Dorsolateral prefrontal cortex (tissue), 120 donors: ENCODE measurements at regions of chr3 and their contacts with region 1.

Region 1: DNA sequence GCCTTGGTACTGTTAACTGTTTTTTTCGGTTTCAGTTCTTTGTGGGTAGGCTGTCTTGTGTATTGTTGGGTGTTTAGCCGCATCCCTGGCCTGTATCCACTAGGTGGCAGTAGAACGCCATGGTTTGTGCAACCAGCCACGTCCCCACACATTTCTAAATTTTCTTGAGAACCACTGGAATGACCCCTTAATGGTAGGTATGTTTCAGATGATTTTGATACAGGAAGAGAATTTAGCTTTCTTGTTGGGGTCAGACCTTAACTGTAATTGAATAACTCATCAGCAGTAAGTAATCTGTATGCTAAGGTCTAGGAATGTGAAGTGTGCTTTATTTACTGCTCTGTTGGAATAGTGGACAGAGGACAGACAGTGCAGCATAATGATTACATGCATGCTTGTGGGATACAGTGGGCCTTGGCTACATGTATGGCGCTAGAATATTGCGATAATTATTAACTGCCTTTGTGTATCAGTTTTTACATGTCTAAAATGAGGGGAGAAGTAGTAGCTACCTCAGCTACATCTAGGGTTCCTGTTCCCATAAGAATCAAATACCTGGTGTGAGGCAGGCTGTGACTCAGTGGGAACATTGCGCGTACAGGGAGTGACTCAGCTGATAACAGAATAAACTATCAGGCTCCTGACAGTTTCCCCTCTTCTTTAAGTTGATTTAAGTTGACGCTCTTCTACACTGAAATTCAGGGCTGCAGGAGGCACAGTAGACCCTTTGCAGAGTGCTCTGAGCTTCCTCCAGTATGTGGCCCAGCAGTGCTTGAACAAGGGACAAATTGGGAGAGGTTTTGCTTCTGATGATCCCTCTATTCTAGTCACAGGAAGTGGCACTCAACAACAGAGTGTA is 25.0 kb upstream of the GPR171 start:
- DNase-seq: peak; percentile 58 to 86 (median 74)
- H3K4me3 ChIP-seq: peak overlapping the region in 5 of 59 donors; percentile 6 to 26 (median 9)
- H3K27ac ChIP-seq: peak overlapping the region in 53 of 59 donors; percentile 11 to 76 (median 46)
- H3K27me3 ChIP-seq: no peaks in the 10 kb centered on the region
- CTCF ChIP-seq: peak; percentile 83 to 98 (median 93)

Region 2: DNA sequence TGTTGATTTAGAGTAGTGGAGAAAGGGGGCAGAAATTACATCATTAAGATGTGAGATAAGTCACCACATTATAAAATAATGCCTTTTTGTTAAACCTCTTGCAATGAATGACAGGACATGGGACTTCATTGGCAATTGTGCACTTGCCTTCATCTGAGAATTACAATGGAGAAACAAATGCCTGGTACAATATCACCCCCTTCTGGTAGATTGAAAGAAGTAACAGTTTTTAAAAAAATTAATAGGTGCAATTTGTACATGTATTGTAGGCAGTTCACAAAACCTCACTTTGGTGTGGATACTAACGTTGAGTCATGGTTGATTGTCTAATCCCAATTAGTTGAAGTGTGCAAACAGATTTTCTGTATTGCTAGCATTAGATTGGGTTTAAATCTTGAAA is 54.9 kb after region 1 on chr3:
- intact Hi-C with region 1: loop called (anchors 2 to 5 kb)
- DNase-seq: no peak
- H3K4me3 ChIP-seq: no peak overlapping the region
- H3K27ac ChIP-seq: no peak overlapping the region
- H3K27me3 ChIP-seq: no peaks in the 10 kb centered on the region
- CTCF ChIP-seq: peak; percentile 64 to 94 (median 83)

Region 3: GRCh38 chr3:151327571-151328198 is 99.6 kb after region 1 on chr3:
- intact Hi-C with region 1: loop called in 1 of 2 experiments (anchors 2 kb)
- DNase-seq: no peak
- H3K4me3 ChIP-seq: peak overlapping the region in 49 of 59 donors; percentile 4 to 53 (median 32)
- H3K27ac ChIP-seq: peak overlapping the region in 50 of 59 donors; percentile 0 to 78 (median 48)
- H3K27me3 ChIP-seq: no peaks in the 10 kb centered on the region
- CTCF ChIP-seq: peak; percentile 33 to 81 (median 65)